GM18951 (cell line): ENCODE measurements at regions of chr6 and their contacts with region 1.

Region 1: GRCh38 chr6:132279592-132280139 is 121.6 kb downstream of the MOXD1 start:
- POLR2A ChIP-seq: no peak

Region 2: GRCh38 chr6:132798869-132799538 is 519.3 kb after region 1 on chr6:
- in situ Hi-C with region 1: loop called (anchors 25 kb)
- POLR2A ChIP-seq: no peak